ENCODE measurements at regions of chr3 and their contacts with region 1.

Region 1: GRCh38 chr3:184727357-184728009 is 15.6 kb upstream of the MAGEF1 start:
- DNase-seq: peak; percentile 74
- CTCF ChIP-seq: peak; percentile 61

Region 2: GRCh38 chr3:184659797-184660306 is 67.6 kb before region 1 on chr3:
- CTCF ChIA-PET with region 1: no interaction called
- POLR2A ChIA-PET with region 1: no interaction called
- DNase-seq: no peak
- CTCF ChIP-seq: no peak

Region 3: GRCh38 chr3:184740524-184741484 is 13.3 kb after region 1 on chr3:
- CTCF ChIA-PET with region 1: interaction called, 47 read pairs
- POLR2A ChIA-PET with region 1: no interaction called
- DNase-seq: no peak
- CTCF ChIP-seq: no peak

Measured in GM10248 (cell line).